Aorta (tissue), 5 donors: ENCODE measurements at regions of chr2 and their contacts with region 1.

Region 1: DNA sequence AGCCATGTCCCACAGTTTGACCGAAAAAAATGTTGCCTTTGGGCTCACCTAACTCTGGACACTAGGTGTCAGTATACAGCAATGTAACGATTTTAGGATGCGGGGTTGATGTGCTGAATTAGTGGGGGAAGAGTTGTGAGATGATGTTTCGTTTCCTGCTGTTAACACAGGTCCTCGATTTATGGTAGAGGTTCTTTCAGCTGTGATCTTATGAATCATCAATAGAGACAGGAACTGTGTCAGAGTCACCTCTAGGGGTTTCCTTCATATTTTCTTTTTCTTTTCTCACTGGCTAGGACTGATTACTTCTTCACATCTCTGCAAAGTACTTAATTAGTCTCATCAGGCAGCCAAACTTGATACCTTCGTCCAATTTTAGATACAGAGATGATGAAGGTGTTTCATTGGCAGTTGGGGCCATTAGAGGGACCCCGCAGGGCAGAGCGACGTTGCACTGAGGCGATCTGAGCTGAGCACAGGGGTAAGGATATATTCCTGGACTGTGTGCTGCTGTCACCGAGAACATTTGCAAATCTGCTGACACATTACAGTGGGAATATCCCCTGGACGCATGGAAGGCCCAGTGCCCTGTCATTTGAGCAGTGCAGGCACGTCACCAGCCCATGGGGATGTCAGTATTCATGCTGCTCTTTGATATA is 10.2 kb upstream of the MMADHC start:
- DNase-seq: peak in 1 of 2 donors; percentile 51
- ATAC-seq: peak; percentile 92
- H3K4me3 ChIP-seq: peak overlapping the region in 1 of 2 donors; percentile 36
- H3K27ac ChIP-seq: no peak overlapping the region
- H3K4me1 ChIP-seq: no peaks in the 10 kb centered on the region
- H3K27me3 ChIP-seq: no peaks in the 10 kb centered on the region

Region 2: GRCh38 chr2:149513461-149513860 is 84.3 kb before region 1 on chr2:
- intact Hi-C with region 1: no loop called
- DNase-seq: no peak
- ATAC-seq: no peak
- H3K4me3 ChIP-seq: no peak overlapping the region
- H3K27ac ChIP-seq: no peak overlapping the region
- H3K4me1 ChIP-seq: no peaks in the 10 kb centered on the region
- H3K27me3 ChIP-seq: no peaks in the 10 kb centered on the region

Region 3: GRCh38 chr2:149799013-149799705 is 201.4 kb after region 1 on chr2:
- intact Hi-C with region 1: no loop called
- DNase-seq: no peak
- ATAC-seq: no peak
- H3K4me3 ChIP-seq: no peak overlapping the region
- H3K27ac ChIP-seq: no peak overlapping the region
- H3K4me1 ChIP-seq: no peaks in the 10 kb centered on the region
- H3K27me3 ChIP-seq: no peaks in the 10 kb centered on the region

Region 4: GRCh38 chr2:149877913-149878312 is 280.1 kb after region 1 on chr2:
- intact Hi-C with region 1: no loop called
- DNase-seq: no peak
- ATAC-seq: no peak
- H3K4me3 ChIP-seq: no peak overlapping the region
- H3K27ac ChIP-seq: no peak overlapping the region
- H3K4me1 ChIP-seq: no peaks in the 10 kb centered on the region
- H3K27me3 ChIP-seq: no peaks in the 10 kb centered on the region

Region 5: GRCh38 chr2:149994057-149994753 is 396.4 kb after region 1 on chr2:
- intact Hi-C with region 1: loop called in 1 of 2 experiments (anchors 5 kb)
- DNase-seq: no peak
- ATAC-seq: no peak
- H3K4me3 ChIP-seq: no peak overlapping the region
- H3K27ac ChIP-seq: peak overlapping the region in 1 of 2 donors; percentile 88
- H3K4me1 ChIP-seq: peaks cover 9 to 18% of the 10 kb centered on the region in 2 donors
- H3K27me3 ChIP-seq: no peaks in the 10 kb centered on the region

Region 6: GRCh38 chr2:150280231-150280630 is 682.4 kb after region 1 on chr2:
- intact Hi-C with region 1: loop called in 1 of 2 experiments (anchors 10 kb)
- DNase-seq: no peak
- ATAC-seq: peak; percentile 88
- H3K4me3 ChIP-seq: no peak overlapping the region
- H3K27ac ChIP-seq: no peak overlapping the region
- H3K4me1 ChIP-seq: no peaks in the 10 kb centered on the region
- H3K27me3 ChIP-seq: no peaks in the 10 kb centered on the region

Region 7: DNA sequence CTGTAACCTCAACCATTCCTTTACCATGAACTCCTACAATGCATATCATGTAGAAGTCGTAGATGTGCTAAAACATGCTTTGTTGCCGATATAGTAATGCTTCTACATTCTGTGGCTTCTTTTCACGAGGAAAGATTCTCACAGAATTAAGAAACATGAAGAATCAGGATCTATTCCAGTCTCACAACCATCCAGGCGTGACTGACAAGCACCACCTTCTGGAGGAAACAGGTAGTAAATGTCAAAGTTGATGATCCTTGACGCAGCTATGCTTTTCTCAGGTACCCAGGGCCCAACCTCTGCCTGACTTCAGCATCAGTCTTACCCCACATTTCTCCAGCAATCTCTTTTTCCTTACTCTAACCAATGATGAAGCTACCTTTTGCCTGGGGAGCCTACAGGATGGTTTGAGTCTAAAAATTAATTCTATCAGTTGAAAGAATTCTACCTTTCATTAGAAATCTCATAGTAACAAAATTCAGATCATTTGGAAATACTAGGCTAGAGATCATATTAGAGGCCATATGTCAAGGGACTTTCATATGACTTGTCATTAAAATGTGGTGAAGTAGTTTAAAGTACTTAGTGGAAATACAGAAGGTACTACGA is 1013.0 kb after region 1 on chr2:
- intact Hi-C with region 1: loop called in 1 of 2 experiments (anchors 5 kb)
- DNase-seq: no peak
- ATAC-seq: no peak
- H3K4me3 ChIP-seq: no peak overlapping the region
- H3K27ac ChIP-seq: no peak overlapping the region
- H3K4me1 ChIP-seq: no peaks in the 10 kb centered on the region
- H3K27me3 ChIP-seq: no peaks in the 10 kb centered on the region

Region 8: GRCh38 chr2:151051574-151052220 is 1453.9 kb after region 1 on chr2:
- intact Hi-C with region 1: loop called (anchors 10 kb)
- DNase-seq: no peak
- ATAC-seq: peak; percentile 71
- H3K4me3 ChIP-seq: no peak overlapping the region
- H3K27ac ChIP-seq: no peak overlapping the region
- H3K4me1 ChIP-seq: no peaks in the 10 kb centered on the region
- H3K27me3 ChIP-seq: no peaks in the 10 kb centered on the region

Region 9: GRCh38 chr2:151238527-151239487 is 1641.0 kb after region 1 on chr2:
- intact Hi-C with region 1: loop called (anchors 5 kb)
- DNase-seq: peak in 1 of 2 donors; percentile 67
- ATAC-seq: peak; percentile 92
- H3K4me3 ChIP-seq: no peak overlapping the region
- H3K27ac ChIP-seq: no peak overlapping the region
- H3K4me1 ChIP-seq: no peaks in the 10 kb centered on the region
- H3K27me3 ChIP-seq: no peaks in the 10 kb centered on the region